ENCODE measurements at regions of chr6 and their contacts with region 1.

Region 1: DNA sequence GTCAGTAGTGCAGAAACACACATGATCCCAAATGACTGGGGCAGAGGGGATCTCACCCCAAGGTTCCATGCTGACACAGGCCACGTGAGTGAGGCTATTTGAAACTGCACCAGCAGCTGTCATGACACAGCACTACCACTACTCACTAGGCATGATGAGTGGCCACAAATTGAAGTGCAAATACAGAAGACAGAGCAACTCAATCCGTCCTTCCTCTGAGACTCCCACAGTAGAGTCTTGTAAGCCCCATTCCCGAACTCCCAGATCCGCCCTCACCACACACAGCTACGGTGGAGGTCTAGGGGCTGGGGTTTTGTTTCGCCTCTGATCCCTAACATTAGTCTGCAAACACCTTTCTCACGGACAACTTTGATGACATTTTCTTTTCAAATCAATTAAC is 113.3 kb upstream of the NUP153 start:
- DNase-seq: no peak
- H3K4me3 Mint-ChIP-seq: no peak overlapping the region
- H3K27ac Mint-ChIP-seq: no peak overlapping the region
- H3K4me1 Mint-ChIP-seq: no peaks in the 10 kb centered on the region
- H3K27me3 Mint-ChIP-seq: peaks cover 6% of the 10 kb centered on the region

Region 2: GRCh38 chr6:17156112-17156921 is 663.7 kb before region 1 on chr6:
- intact Hi-C with region 1: loop called (anchors 2 kb)
- DNase-seq: peak; percentile 85
- H3K4me3 Mint-ChIP-seq: no peak overlapping the region
- H3K27ac Mint-ChIP-seq: no peak overlapping the region
- H3K4me1 Mint-ChIP-seq: no peaks in the 10 kb centered on the region
- H3K27me3 Mint-ChIP-seq: peaks cover 6% of the 10 kb centered on the region